Gastrocnemius medialis (tissue), 4 donors: ENCODE measurements at regions of chr5 and their contacts with region 1.

Region 1: DNA sequence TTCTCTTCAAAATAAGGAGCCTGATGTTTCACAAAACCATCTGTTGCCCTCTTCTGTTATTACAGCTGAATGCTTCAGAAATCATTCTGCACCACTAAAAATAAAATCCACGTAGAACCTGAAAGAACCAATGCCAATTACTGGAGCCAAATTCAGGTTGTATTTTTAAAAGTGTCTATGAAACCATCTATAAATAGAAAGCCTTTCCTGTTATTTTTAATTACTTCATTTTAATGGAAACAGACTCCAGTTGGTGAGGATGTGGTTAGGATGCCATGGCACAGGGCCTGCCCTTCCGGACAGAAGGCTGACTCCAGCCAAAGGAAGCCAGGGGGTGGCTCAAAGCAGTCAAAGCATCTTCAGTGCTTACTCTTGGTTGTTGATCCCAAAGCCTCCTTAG is 119.8 kb downstream of the TENT4A start:
- DNase-seq: peak; percentile 23 to 31
- ATAC-seq: peak; percentile 72 to 94
- H3K4me3 ChIP-seq: no peak overlapping the region
- H3K27ac ChIP-seq: peak overlapping the region in 3 of 4 donors; percentile 31 to 66 (median 49)
- H3K4me1 ChIP-seq: peaks cover 15 to 30% of the 10 kb centered on the region in 2 donors
- H3K27me3 ChIP-seq: no peaks in the 10 kb centered on the region
- CTCF ChIP-seq: no peak
- POLR2A ChIP-seq: no peak

Region 2: GRCh38 chr5:6623941-6624340 is 209.1 kb before region 1 on chr5:
- in situ Hi-C with region 1: no loop called
- intact Hi-C with region 1: no loop called
- DNase-seq: no peak
- ATAC-seq: no peak
- H3K4me3 ChIP-seq: no peak overlapping the region
- H3K27ac ChIP-seq: no peak overlapping the region
- H3K4me1 ChIP-seq: no peaks in the 10 kb centered on the region
- H3K27me3 ChIP-seq: no peaks in the 10 kb centered on the region
- CTCF ChIP-seq: no peak
- POLR2A ChIP-seq: no peak

Region 3: DNA sequence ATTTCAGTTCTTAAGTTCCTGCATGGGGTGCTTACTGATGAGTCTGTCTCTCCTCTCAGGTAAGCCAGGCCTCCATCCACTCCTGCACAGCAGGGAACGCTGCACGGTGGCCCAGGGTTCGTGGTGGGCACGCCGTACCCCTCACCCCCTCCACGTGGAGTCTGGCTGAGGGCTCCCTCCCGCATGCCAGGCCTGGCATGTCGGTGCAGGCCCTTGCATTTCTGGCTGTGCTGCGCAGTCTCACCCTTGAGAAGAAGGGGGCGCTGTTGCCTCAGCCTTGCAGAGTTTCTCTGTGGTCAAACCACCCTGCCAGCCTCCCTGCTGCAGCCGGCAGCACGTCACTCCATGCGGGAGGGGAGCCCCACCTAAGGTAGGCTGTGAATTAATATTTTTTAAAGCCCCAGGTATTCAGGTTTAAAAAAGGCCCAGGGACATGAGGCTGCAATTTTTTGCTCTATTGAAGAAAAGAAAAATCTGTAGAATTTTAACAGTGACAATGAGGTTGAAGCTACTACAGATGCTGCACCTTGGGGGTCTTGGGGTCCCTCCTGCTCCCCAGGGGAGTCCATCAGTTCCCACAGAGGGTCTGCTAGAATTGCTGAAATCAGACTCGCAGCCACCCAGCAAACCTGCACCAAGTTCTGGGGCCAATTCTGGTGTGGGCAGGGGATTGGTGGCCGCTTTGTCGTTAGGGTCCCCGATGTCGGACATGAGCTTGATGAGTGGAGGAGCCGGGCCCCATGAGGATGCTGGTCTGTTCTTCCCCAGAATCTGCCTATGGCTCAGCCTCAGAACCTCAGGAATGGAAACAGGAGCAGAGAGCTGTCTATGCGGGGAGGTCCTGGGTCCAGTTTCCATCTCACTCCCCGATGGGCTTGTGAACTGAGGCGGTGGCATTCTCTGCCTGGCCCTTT is 67.1 kb before region 1 on chr5:
- in situ Hi-C with region 1: no loop called
- intact Hi-C with region 1: loop called (anchors 5 kb)
- DNase-seq: peak; percentile 43 to 65
- ATAC-seq: peak; percentile 47 to 68
- H3K4me3 ChIP-seq: no peak overlapping the region
- H3K27ac ChIP-seq: peak overlapping the region; percentile 58 to 81 (median 80)
- H3K4me1 ChIP-seq: peaks cover 16 to 25% of the 10 kb centered on the region in 2 donors
- H3K27me3 ChIP-seq: no peaks in the 10 kb centered on the region
- CTCF ChIP-seq: peak; percentile 58 to 81 (median 79)
- POLR2A ChIP-seq: no peak

Region 4: GRCh38 chr5:6812800-6813731 is 19.9 kb before region 1 on chr5:
- in situ Hi-C with region 1: no loop called
- intact Hi-C with region 1: loop called (anchors 2 kb)
- DNase-seq: no peak
- ATAC-seq: no peak
- H3K4me3 ChIP-seq: no peak overlapping the region
- H3K27ac ChIP-seq: no peak overlapping the region
- H3K4me1 ChIP-seq: peaks cover 4 to 8% of the 10 kb centered on the region in 2 donors
- H3K27me3 ChIP-seq: no peaks in the 10 kb centered on the region
- CTCF ChIP-seq: no peak
- POLR2A ChIP-seq: no peak

Region 5: GRCh38 chr5:7770436-7770835 is 937.4 kb after region 1 on chr5:
- in situ Hi-C with region 1: no loop called
- intact Hi-C with region 1: no loop called
- DNase-seq: no peak
- ATAC-seq: no peak
- H3K4me3 ChIP-seq: no peak overlapping the region
- H3K27ac ChIP-seq: peak overlapping the region in 3 of 4 donors; percentile 4 to 38 (median 27)
- H3K4me1 ChIP-seq: peaks cover 0 to 14% of the 10 kb centered on the region in 2 donors
- H3K27me3 ChIP-seq: no peaks in the 10 kb centered on the region
- CTCF ChIP-seq: no peak
- POLR2A ChIP-seq: no peak